ENCODE measurements at regions of chr13 and their contacts with region 1.

Region 1: GRCh38 chr13:25114220-25114619 is 18.3 kb downstream of the PABPC3 start:
- DNase-seq: peak; percentile 69
- ATAC-seq: peak; percentile 98
- H3K4me3 ChIP-seq: no peak overlapping the region
- H3K27ac ChIP-seq: no peak overlapping the region
- H3K4me1 ChIP-seq: no peaks in the 10 kb centered on the region
- H3K27me3 ChIP-seq: peaks cover 2% of the 10 kb centered on the region
- CTCF ChIP-seq: peak; percentile 82
- POLR2A ChIP-seq: no peak
- RAD21 ChIP-seq: peak; percentile 70

Region 2: DNA sequence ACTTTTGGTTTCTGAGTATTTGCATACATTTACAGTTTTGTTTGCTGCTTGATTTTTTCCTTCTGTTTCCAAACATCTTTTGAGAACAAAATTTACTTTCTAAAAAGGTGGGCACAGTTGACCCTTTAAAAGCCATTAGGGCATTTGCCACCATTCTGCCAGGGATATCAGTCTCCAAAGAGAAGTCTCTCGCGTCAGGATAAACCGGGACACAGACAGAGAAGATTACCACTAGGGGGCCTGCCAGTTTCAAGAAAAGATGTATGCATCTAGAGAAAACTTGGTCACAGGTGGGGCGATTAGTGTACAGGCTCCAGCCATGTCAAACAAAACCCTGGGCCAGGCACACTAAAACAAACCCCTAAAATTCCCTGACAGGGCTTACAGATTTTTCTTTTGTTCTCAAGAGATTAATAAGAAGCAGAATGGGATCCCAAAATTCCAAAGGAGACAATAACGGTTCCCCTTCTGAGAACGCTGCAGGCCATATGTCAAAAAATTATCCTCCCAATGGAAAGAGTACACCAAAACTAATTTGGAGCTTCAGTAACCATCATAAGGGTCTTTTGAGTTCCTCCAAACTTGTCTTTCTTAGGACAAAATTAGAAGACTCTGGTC is 29.0 kb before region 1 on chr13:
- CTCF ChIA-PET with region 1: interaction called, 4 read pairs
- POLR2A ChIA-PET with region 1: no interaction called
- dilution Hi-C with region 1: no loop called
- in situ Hi-C with region 1: no loop called
- intact Hi-C with region 1: loop called (anchors 1 kb)
- DNase-seq: peak; percentile 26
- ATAC-seq: peak; percentile 56; the same call in 1 of the 2 replicates
- H3K4me3 ChIP-seq: no peak overlapping the region
- H3K27ac ChIP-seq: no peak overlapping the region
- H3K4me1 ChIP-seq: no peaks in the 10 kb centered on the region
- H3K27me3 ChIP-seq: peaks cover 3% of the 10 kb centered on the region; the same call in 1 of the 2 replicates
- CTCF ChIP-seq: peak; percentile 56
- POLR2A ChIP-seq: no peak
- RAD21 ChIP-seq: peak; percentile 49

Region 3: GRCh38 chr13:25137637-25138115 is 23.5 kb after region 1 on chr13:
- CTCF ChIA-PET with region 1: no interaction called
- POLR2A ChIA-PET with region 1: no interaction called
- dilution Hi-C with region 1: no loop called
- in situ Hi-C with region 1: no loop called
- intact Hi-C with region 1: no loop called
- DNase-seq: no peak
- ATAC-seq: no peak
- H3K4me3 ChIP-seq: no peak overlapping the region
- H3K27ac ChIP-seq: no peak overlapping the region
- H3K4me1 ChIP-seq: no peaks in the 10 kb centered on the region
- H3K27me3 ChIP-seq: peaks cover 8% of the 10 kb centered on the region
- CTCF ChIP-seq: no peak
- POLR2A ChIP-seq: no peak
- RAD21 ChIP-seq: no peak